Activated T-helper 1 cell treated with anti-CD3 and anti-CD28 coated beads, Interleukin-12 subunit alpha, Interleukin-12 subunit beta, Interleukin-2, Interleukin-4 antibody, amounts not matched to agents 30 ng/mL and 10 ng/mL and 1 ng/mL, durations not matched to agents 14 hours and 24 hours and 36 hours (primary cell): ENCODE measurements at regions of chr10 and their contacts with region 1.

Region 1: DNA sequence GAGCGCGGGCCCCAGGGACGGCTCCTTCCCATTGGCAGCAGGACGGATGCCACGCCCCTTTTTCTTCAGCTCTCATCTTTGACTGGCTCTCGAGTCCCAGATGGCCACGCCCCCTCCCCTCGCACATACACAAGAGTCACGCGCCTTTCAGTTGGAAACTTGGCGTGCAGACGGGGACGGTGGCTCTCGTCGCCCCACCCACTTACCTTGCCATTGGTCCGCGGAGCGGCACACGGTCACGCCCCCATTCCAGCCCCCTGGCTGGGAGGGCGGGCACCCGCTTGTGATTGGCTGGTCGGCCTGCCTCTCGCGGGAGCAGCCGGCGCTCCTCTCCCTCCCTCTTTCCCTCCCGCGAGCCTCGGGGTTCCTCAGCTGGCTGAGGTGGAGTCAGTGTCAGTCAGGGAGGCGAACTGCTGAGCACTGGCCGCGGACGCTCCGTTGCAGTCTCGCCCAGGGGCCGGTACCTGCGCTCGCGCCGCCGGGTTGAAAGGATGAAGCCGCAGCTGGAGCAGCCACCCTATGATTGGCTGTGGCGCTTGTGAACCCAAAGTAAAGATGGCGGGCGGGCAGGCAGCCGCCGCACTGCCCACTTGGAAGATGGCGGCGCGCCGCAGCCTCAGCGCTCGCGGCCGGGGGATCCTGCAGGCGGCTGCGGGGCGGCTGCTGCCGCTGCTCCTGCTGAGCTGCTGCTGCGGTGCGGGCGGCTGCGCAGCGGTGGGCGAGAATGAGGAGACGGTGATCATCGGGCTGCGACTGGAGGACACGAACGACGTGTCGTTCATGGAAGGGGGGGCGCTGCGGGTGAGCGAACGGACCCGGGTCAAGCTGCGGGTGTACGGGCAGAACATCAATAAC is at the start of gene CNNM2:
- DNase-seq: peak; percentile 99
- H3K4me3 Mint-ChIP-seq: peak within 1 kb of the TSS; percentile 92
- H3K27ac Mint-ChIP-seq: peak within 1 kb of the TSS; percentile 91
- H3K4me1 Mint-ChIP-seq: peaks cover 60% of the 10 kb centered on the region
- H3K27me3 Mint-ChIP-seq: peaks cover 7% of the 10 kb centered on the region
- total RNA-seq, gene CNNM2: 5.5 and 6.6 TPM in 2 replicates

Region 2: GRCh38 chr10:102713814-102714620 is 204.2 kb before region 1 on chr10 and contains the start of gene ARL3:
- intact Hi-C with region 1: loop called (anchors 5 kb)
- DNase-seq: peak; percentile 95
- H3K4me3 Mint-ChIP-seq: peak within 1 kb of the TSS; percentile 88
- H3K27ac Mint-ChIP-seq: peak within 1 kb of the TSS; percentile 91
- H3K4me1 Mint-ChIP-seq: peaks cover 52% of the 10 kb centered on the region
- H3K27me3 Mint-ChIP-seq: no peaks in the 10 kb centered on the region
- total RNA-seq, gene ARL3: 6.6 and 6.8 TPM in 2 replicates

Region 3: DNA sequence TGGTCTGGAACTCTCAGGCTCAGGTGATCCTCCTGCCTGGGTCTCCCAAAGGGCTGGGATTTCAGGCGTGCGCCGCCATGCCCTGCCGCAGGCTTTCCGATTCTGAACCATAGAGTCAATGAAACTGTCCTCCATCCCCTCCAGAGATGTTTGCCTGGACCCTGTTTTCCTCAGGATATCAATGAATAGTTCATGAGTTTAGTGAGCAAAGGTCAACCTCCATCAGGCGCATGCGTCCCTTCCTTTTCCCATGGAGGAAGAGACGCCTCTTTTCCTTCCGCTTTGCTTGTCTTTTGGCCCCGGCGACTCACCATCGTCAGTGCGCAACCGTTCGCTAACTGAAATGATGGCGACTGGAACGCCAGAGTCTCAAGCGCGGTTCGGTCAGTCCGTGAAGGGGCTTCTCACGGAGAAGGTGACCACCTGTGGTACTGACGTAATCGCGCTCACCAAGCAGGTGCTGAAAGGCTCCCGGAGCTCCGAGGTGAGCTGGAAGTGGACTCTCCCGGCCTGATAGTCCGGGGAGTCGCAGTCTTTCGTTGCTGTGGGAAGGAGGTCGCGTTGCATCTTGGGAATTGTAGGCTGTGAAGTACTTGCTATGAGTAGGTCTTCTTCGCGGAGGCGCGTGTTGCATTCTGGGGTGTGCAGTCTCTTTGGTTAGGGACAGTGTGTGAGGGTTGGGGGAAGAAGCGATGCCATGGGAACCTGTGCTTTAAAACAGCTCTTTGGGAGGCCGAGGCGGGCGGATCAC is 64.1 kb before region 1 on chr10 and contains the start of gene BORCS7:
- intact Hi-C with region 1: loop called (anchors 1 kb)
- DNase-seq: peak; percentile 84
- H3K4me3 Mint-ChIP-seq: peak within 1 kb of the TSS; percentile 82
- H3K27ac Mint-ChIP-seq: peak within 1 kb of the TSS; percentile 92
- H3K4me1 Mint-ChIP-seq: peaks cover 19% of the 10 kb centered on the region
- H3K27me3 Mint-ChIP-seq: no peaks in the 10 kb centered on the region
- total RNA-seq, gene BORCS7: 9.7 and 12.6 TPM in 2 replicates

Region 4: DNA sequence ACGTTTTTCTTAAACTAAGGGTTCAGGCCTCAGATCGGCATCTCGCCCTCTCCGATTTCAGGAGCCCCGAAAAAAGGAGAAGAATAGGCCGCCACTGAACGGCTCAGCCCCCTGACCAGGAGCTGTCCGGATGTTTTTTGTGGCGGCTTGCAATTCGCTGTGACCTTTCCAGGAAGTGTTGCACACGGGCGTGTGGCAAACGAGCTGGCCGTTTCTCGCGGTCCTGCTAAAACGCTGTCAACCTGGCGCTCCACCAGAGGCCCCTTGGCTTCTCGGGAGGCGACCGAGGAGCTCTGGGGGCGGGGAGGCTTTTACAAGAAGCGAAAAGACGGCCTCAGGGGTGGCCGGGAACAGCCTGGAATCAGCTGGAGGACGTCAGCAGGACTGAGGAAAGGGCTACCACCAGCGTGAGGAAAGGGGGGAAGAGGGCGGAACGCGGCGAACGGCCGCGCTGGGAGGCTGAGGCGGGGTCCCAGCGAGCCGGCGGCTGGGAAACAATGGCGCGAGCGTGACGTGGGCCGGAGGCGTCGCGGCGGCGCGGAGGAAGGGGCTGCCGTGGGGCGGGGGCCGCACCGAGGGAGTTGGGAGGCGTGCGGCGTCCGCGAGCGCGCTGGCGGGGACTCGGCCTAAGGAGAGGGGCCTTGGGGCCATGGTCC is 274.4 kb after region 1 on chr10:
- intact Hi-C with region 1: loop called (anchors 2 kb)
- DNase-seq: peak; percentile 64
- H3K4me3 Mint-ChIP-seq: peak overlapping the region; percentile 96
- H3K27ac Mint-ChIP-seq: peak overlapping the region; percentile 99
- H3K4me1 Mint-ChIP-seq: peaks cover 45% of the 10 kb centered on the region
- H3K27me3 Mint-ChIP-seq: no peaks in the 10 kb centered on the region

Region 5: GRCh38 chr10:103350501-103351260 is 432.5 kb after region 1 on chr10 and contains the start of gene PCGF6:
- intact Hi-C with region 1: loop called (anchors 5 kb)
- DNase-seq: peak; percentile 74
- H3K4me3 Mint-ChIP-seq: peak within 1 kb of the TSS; percentile 91
- H3K27ac Mint-ChIP-seq: peak within 1 kb of the TSS; percentile 89
- H3K4me1 Mint-ChIP-seq: peaks cover 4% of the 10 kb centered on the region
- H3K27me3 Mint-ChIP-seq: no peaks in the 10 kb centered on the region
- total RNA-seq, gene PCGF6: 19.3 and 21.0 TPM in 2 replicates

Region 6: DNA sequence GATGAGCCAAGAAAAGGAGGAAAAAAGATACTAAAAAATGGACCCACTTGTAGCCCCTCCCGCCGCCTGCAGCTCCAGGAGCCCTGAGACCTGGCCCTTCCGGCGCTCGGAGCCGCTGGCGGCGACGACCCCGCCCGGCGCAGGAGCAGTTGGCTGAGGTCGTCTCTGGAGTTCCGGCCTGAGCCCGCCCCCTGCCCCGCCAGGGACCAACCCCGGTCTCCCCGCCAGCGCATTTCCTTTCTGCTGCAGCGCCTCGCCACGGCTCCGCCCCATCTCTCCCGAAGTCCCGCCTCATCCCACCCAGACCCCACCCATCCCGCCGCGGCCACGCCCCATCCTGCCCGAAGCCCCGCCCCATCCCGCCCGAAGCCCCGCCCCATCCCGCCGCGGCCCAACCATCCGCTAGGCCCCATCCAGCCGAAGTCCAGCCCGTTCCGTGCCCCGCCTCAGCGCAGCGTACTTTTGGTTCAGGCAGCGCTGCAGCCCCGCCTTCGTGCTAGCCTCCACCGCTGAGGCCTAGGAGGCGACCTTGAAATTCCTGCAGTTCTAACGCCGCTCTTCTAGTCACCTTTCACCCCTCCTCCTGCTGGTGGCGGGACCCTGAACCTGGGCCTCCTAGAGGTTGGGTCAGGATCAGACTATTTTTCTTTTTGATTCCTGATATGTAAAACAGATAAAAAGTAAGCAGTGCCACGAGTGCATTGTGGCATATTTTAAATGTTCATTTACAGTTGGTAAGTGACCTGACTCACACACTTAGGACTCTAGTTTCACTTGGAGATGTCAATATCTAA is 1000.1 kb after region 1 on chr10 and contains the start of gene STN1:
- intact Hi-C with region 1: loop called (anchors 5 kb)
- DNase-seq: peak; percentile 94
- H3K4me3 Mint-ChIP-seq: peak within 1 kb of the TSS; percentile 93
- H3K27ac Mint-ChIP-seq: peak within 1 kb of the TSS; percentile 94
- H3K4me1 Mint-ChIP-seq: peaks cover 36% of the 10 kb centered on the region
- H3K27me3 Mint-ChIP-seq: no peaks in the 10 kb centered on the region
- total RNA-seq, gene STN1: 19.4 and 20.0 TPM in 2 replicates